Heart right ventricle (tissue), 16 donors: ENCODE measurements at regions of chr9 and their contacts with region 1.

Region 1: DNA sequence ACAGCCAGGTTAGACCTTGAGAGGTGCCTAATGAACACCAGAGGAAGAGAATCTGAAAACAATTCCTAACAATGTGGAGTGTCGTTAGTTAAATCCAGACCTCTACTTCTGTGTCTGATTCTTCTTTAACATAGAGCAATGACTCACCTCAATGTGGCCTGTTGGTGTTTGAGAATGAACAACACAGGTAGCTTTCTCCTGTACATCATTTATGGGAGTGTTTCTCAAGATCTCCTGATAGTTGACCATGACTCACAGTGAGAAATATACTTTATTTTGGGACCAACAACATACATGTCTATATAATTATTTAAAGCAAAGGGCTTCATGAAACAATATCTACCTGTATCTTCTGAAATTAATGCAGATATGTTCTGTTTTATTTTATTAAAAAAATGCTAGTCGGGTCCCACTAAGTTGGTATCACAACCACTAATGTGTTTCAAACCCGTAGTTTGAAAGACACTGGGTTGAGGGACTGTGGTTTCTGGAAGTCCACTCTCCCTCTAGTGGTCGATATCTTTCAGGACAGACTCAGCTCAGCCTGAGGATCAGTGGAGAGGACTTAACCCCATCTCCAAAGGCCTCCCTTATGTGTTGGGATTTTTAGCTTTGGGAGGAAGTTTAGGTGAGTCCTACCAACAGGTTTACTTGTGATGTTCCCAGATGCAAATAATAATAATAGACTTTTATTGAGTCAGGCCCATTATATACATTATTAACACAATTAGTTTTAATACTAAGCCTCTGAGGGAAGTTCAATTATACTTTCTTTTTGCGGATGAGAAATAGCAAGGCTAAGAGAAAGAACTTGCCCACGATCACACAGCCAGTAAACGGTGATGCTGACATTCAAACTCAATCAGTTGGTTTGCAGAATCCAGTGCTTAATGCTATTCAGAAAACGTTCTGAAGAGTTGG is 70.0 kb upstream of the KLF9 start:
- DNase-seq: peak in 1 of 2 donors; percentile 67
- ATAC-seq: peak; percentile 57 to 86 (median 78)
- H3K4me3 ChIP-seq: no peak overlapping the region
- H3K27ac ChIP-seq: peak overlapping the region; percentile 26 to 80 (median 68)
- H3K4me1 ChIP-seq: peaks cover 19 to 82% (median 71%) of the 10 kb centered on the region in 9 donors
- H3K27me3 ChIP-seq: no peaks in the 10 kb centered on the region
- CTCF ChIP-seq: peak; percentile 56 to 87 (median 82)

Region 2: GRCh38 chr9:70258692-70259511 is 225.6 kb before region 1 on chr9 and contains the start of gene SMC5:
- intact Hi-C with region 1: loop called in 1 of 10 experiments (anchors 10 kb)
- DNase-seq: peak; percentile 87 to 92
- ATAC-seq: peak; percentile 96 to 99 (median 98)
- H3K4me3 ChIP-seq: peak within 1 kb of the TSS; percentile 68 to 87 (median 82)
- H3K27ac ChIP-seq: peak within 1 kb of the TSS; percentile 77 to 98 (median 92)
- H3K4me1 ChIP-seq: peaks cover 0 to 62% (median 55%) of the 10 kb centered on the region in 9 donors
- H3K27me3 ChIP-seq: no peaks in the 10 kb centered on the region
- CTCF ChIP-seq: no peak
- total RNA-seq, gene SMC5: 9.3 to 16.4 (median 13.7) TPM

Region 3: DNA sequence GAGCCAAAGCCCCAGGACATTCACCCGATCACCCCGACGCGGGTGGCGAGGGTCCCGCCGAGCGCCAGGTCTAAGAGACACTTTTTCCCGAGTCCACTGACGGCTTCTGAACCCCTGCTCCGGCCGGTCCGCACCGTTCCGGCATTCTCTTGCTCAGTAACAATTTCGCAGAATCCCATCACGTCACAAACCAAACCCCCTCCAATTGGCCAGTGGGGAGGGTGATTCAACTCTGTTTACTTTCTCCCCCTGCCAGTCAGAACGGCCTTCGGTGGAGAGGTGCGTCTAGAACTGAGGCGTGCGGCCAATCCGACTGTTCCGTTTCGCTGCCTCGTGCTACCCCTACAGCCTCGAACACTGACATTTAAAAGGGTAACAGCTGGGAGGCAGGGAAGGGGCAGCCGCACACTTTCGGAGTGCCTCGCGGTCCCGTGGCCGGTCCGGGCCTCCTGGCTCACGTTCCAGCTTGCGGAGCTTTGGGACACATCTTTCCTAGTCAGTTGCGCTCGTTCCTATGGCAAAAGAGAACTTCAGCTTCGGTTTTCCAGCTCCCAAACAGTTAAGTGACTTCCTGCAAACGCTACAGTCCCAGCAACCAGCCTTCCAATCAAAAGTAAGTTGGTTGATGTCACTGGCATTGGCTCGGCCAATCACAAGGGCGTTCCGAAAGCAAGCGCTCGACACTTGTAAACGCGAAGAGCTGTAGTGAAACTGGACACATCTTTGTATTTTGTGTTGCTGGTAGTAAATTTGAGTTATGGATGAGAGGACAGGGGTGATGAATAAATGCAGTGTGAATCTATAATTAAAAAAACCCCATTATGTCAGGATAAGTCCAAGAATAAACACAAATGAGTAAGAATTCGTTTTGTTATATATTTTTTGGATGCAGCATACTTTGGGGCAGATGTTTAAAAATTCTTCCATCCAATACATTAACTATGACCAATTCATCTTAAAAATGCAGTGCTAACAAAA is 70.4 kb before region 1 on chr9 and contains the start of gene KLF9:
- intact Hi-C with region 1: loop called in 2 of 10 experiments (anchors 1 to 5 kb)
- DNase-seq: peak; percentile 87 to 96
- ATAC-seq: peak; percentile 74 to 85 (median 81)
- H3K4me3 ChIP-seq: peak within 1 kb of the TSS; percentile 69 to 99 (median 78)
- H3K27ac ChIP-seq: peak within 1 kb of the TSS; percentile 99 to 100 (median 100)
- H3K4me1 ChIP-seq: peaks cover 12 to 67% (median 60%) of the 10 kb centered on the region in 9 donors
- H3K27me3 ChIP-seq: no peaks in the 10 kb centered on the region
- CTCF ChIP-seq: peak in 1 of 9 donors; percentile 10
- total RNA-seq, gene KLF9: 27.3 to 67.4 (median 41.1) TPM

Region 4: DNA sequence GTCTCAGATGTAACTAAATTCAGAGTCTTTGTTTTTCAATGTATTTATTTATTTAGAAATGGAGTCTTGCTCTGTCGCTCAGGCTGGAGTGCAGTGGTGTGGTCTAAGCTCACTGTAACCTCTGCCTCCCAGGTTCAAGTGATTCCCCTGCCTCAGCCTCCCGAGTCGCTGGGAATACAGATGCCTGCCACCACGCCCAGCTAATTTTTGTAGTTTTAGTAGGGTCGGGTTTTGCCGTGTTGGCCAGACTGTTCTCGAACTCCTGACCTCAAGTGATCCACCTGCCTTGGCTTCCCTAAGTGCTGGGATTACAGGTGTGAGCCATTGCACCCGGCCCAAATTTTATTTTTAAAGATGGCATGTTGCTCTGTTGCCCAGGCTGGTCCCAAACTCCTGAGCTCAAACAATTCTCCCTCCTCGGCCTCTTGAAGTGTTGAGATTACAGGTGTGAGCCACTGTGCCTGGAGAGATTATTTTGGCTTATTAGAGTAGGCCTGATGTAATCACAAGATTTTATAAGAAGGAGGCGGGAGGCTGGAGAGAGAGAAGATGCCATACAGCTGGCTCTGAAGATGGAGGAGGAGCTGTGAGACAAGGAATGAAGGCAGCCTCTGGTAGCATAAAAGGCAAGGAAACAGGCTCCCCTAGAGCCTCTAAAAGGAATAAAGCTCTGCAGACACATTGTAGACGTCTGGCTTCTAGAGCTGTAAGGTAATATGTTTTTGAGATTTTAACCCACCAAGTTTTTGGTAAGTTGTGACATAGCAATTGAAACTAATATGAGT is 57.1 kb before region 1 on chr9:
- intact Hi-C with region 1: loop called in 2 of 10 experiments (anchors 5 kb)
- DNase-seq: no peak
- ATAC-seq: peak in 2 of 8 donors; percentile 32 to 40
- H3K4me3 ChIP-seq: no peak overlapping the region
- H3K27ac ChIP-seq: no peak overlapping the region
- H3K4me1 ChIP-seq: peaks cover under 1 to 14% (median 6%) of the 10 kb centered on the region in 9 donors
- H3K27me3 ChIP-seq: no peaks in the 10 kb centered on the region
- CTCF ChIP-seq: no peak

Region 5: GRCh38 chr9:70587201-70587600 is 102.7 kb after region 1 on chr9:
- intact Hi-C with region 1: loop called in 3 of 10 experiments (anchors 5 to 10 kb)
- DNase-seq: peak in 1 of 2 donors; percentile 36
- ATAC-seq: peak; percentile 65 to 89 (median 80)
- H3K4me3 ChIP-seq: no peak overlapping the region
- H3K27ac ChIP-seq: peak overlapping the region; percentile 69 to 91 (median 80)
- H3K4me1 ChIP-seq: peaks cover 22 to 64% (median 58%) of the 10 kb centered on the region in 9 donors
- H3K27me3 ChIP-seq: no peaks in the 10 kb centered on the region
- CTCF ChIP-seq: no peak

Region 6: DNA sequence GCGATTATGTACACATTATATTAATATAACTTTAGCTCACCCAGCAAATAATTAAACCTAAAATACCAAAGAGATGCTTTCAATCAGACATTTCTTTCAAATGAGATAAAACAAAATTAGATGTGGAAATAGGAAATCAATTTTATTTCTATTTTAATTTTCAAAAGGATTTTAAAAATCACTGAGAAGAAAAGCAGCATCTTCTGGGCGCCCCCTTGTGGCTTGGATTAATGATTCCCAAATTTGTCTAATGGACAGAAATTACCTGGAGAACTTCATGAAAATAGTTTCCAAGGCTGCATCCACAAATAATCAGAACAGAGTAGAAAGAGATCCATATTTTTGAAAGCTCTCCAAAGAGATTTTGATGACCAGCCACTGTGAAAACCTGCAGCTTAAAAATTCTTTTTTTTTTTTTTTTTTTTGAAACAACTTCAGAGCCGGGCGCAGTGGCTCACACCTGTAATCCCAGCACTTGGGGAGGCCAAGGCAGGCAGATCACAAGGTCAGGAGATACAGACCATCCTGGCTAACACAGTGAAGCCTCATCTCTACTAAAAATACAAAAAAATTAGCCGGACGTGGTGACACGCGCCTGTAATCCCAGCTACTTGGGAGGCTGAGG is 1334.8 kb after region 1 on chr9:
- intact Hi-C with region 1: no loop called
- DNase-seq: peak in 1 of 2 donors; percentile 48
- ATAC-seq: no peak
- H3K4me3 ChIP-seq: no peak overlapping the region
- H3K27ac ChIP-seq: no peak overlapping the region
- H3K4me1 ChIP-seq: peaks cover 0 to 9% (median 0%) of the 10 kb centered on the region in 9 donors
- H3K27me3 ChIP-seq: no peaks in the 10 kb centered on the region
- CTCF ChIP-seq: peak; percentile 64 to 87 (median 78)